Activated T-helper 2 cell treated with anti-CD3 and anti-CD28 coated beads, Interferon-gamma antibody, Interleukin-2, Interleukin-4, amounts not matched to agents 10 μg/mL and 5 μg/mL and 100 μg/mL, durations not matched to agents 14 hours and 24 hours and 36 hours (primary cell): ENCODE measurements at regions of chr2 and their contacts with region 1.

Region 1: GRCh38 chr2:234500394-234501006 is 3.6 kb upstream of the ARL4C start:
- DNase-seq: peak; percentile 66
- H3K4me3 Mint-ChIP-seq: no peak overlapping the region
- H3K27ac Mint-ChIP-seq: no peak overlapping the region
- H3K4me1 Mint-ChIP-seq: peaks cover 31% of the 10 kb centered on the region
- H3K27me3 Mint-ChIP-seq: peaks cover 18% of the 10 kb centered on the region

Region 2: GRCh38 chr2:233867993-233868532 is 632.4 kb before region 1 on chr2 and contains the start of gene MSL3B:
- intact Hi-C with region 1: loop called (anchors 5 kb)
- DNase-seq: peak; percentile 47
- H3K4me3 Mint-ChIP-seq: peak within 1 kb of the TSS; percentile 88
- H3K27ac Mint-ChIP-seq: peak within 1 kb of the TSS; percentile 82
- H3K4me1 Mint-ChIP-seq: peaks cover 19% of the 10 kb centered on the region
- H3K27me3 Mint-ChIP-seq: peaks cover 24% of the 10 kb centered on the region

Region 3: GRCh38 chr2:233976690-233977294 is 523.7 kb before region 1 on chr2:
- intact Hi-C with region 1: loop called (anchors 1 kb)
- DNase-seq: no peak
- H3K4me3 Mint-ChIP-seq: no peak overlapping the region
- H3K27ac Mint-ChIP-seq: no peak overlapping the region
- H3K4me1 Mint-ChIP-seq: peaks cover 15% of the 10 kb centered on the region
- H3K27me3 Mint-ChIP-seq: peaks cover 22% of the 10 kb centered on the region